Endothelial cell of umbilical vein (primary cell): ENCODE measurements at regions of chr21 and their contacts with region 1.

Region 1: DNA sequence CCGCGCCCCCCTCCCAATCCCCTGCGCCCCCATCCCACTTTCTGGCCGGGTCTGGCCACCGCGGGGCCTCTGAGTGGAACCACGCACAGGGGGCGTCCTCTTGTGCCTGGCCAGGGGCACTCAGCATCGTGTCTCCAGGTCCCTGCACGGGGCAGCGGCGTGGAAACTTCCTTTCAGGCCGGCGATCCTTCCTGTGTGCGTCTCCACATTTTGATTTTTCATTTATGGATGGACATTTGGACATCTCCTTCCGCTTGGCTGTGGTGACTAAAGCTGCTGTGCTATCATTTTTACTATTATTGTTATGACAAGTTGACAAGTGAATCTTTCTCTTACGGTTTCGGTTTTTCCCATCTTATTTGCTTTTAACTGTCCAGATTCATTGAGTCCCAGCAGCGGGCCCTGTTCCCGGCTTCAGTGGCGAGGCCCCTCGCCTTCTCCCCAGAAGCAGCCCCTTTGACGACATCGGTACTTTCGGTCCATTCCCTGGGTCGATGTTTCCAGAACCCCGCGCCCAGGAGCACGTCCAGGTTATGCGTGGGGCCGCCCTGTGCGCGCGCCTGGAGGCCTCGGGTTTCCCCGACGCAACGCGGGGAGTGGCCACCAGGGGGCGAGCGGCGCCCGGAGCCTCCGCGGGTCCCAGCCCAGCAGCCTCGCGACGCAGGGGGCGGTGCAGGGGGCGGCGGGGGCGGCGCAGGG is 12.4 kb upstream of the SLC19A1 start:
- DNase-seq: peak; percentile 75
- H3K4me3 ChIP-seq: peak overlapping the region; percentile 48 to 74 (median 70)
- H3K27ac ChIP-seq: peak overlapping the region; percentile 39
- H3K4me1 ChIP-seq: peaks cover 28% of the 10 kb centered on the region
- H3K27me3 ChIP-seq: peaks cover 0 to 5% of the 10 kb centered on the region in 2 experiments
- CTCF ChIP-seq: peak; percentile 70 to 85
- POLR2A ChIP-seq: peak; percentile 20

Region 2: GRCh38 chr21:45248893-45249381 is 305.7 kb before region 1 on chr21:
- CTCF ChIA-PET with region 1: no interaction called
- POLR2A ChIA-PET with region 1: no interaction called
- dilution Hi-C with region 1: no loop called
- intact Hi-C with region 1: no loop called
- DNase-seq: no peak
- H3K4me3 ChIP-seq: no peak overlapping the region
- H3K27ac ChIP-seq: no peak overlapping the region
- H3K4me1 ChIP-seq: no peaks in the 10 kb centered on the region
- H3K27me3 ChIP-seq: peaks cover 3 to 20% of the 10 kb centered on the region in 2 experiments
- CTCF ChIP-seq: no peak
- POLR2A ChIP-seq: no peak

Region 3: GRCh38 chr21:45568383-45568782 is 13.8 kb after region 1 on chr21:
- CTCF ChIA-PET with region 1: interaction called, 15 read pairs
- POLR2A ChIA-PET with region 1: no interaction called
- dilution Hi-C with region 1: no loop called
- intact Hi-C with region 1: no loop called
- DNase-seq: no peak
- H3K4me3 ChIP-seq: no peak overlapping the region
- H3K27ac ChIP-seq: no peak overlapping the region
- H3K4me1 ChIP-seq: no peaks in the 10 kb centered on the region
- H3K27me3 ChIP-seq: peaks cover 4 to 24% of the 10 kb centered on the region in 2 experiments
- CTCF ChIP-seq: no peak
- POLR2A ChIP-seq: no peak

Region 4: DNA sequence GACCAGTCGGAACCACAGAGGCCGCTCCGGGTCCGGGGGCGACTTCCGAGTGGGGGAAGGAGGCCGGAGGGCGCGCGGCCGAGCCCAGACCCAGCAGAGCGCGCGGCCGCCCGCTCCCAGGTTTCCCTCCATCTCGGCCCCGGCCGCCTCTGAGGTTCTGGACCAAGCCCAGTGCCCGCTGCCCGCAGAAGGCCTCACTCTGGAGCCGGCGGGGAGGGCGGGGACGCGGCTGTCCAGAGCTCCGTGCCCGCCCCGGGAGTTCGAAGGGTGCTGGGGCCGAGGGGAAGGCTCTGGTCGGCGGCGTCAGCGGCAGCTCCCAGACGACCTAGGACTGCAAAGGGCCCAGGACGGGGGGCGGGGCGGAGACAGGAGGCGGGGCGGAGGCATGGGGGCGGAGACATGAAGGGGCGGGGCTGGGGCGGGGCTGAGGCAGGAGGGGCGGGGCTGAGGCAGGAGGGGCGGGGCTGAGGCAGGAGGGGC is 35.7 kb after region 1 on chr21:
- CTCF ChIA-PET with region 1: interaction called, 103 read pairs
- POLR2A ChIA-PET with region 1: no interaction called
- dilution Hi-C with region 1: no loop called
- intact Hi-C with region 1: no loop called
- DNase-seq: peak; percentile 30
- H3K4me3 ChIP-seq: peak overlapping the region; percentile 11 to 39 (median 30)
- H3K27ac ChIP-seq: no peak overlapping the region
- H3K4me1 ChIP-seq: peaks cover 7% of the 10 kb centered on the region
- H3K27me3 ChIP-seq: peaks cover 9 to 10% of the 10 kb centered on the region in 2 experiments
- CTCF ChIP-seq: no peak
- POLR2A ChIP-seq: no peak

Region 5: DNA sequence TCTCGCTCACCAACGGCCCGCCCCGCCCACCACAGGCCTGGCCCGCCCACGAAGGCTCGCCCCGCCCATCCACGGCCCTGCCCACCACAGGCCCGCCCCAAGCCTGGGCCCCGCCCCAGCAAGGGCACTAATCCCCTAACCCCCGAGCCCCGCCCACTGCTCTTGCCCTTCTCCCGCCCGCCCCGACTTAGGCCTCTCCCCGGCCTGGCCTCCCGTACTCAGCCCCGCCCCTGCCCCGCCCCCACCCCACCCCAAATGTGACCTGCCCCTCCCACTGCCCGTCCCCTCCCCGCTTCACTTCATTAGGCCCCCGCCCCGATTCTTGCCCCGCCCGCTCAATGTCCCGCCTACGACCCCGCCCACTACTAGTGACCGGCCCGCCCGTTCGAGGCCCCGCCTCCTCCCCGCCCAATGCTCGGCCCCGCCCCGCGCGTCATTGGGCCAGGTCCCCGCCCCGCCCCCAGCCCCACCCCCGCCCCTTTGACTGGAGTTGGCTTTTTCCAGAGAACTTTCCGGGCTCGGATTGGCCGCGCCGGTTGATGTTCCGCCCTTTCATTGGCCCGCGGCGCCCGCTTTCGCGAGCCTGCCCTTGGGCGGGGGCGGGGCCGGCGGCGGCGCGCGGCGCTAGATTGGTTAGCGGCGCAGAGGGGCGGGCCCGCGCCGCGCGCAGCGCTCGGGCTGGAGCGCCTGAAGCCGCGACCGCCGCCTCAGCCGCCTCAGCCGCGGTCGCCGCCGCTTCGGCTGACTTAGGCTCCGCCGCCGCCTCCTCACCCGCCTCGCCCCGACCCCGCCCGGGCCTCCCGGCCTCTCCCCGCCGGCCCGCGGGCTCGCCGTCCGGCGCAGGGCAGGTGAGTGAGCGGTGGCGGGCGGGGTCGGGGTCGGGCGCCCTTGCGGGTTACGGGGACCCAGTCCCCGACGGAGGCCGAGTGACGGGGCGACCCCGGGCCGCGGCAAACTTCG is 88.7 kb after region 1 on chr21 and contains the start of gene PCBP3:
- CTCF ChIA-PET with region 1: interaction called, 4 read pairs
- POLR2A ChIA-PET with region 1: no interaction called
- dilution Hi-C with region 1: no loop called
- intact Hi-C with region 1: loop called (anchors 2 kb)
- DNase-seq: peak; percentile 86
- H3K4me3 ChIP-seq: peak within 1 kb of the TSS; percentile 16 to 32 (median 22)
- H3K27ac ChIP-seq: no peak within 1 kb of the TSS
- H3K4me1 ChIP-seq: no peaks in the 10 kb centered on the region
- H3K27me3 ChIP-seq: peaks cover 13 to 29% of the 10 kb centered on the region in 2 experiments
- CTCF ChIP-seq: no peak
- POLR2A ChIP-seq: no peak
- total RNA-seq, gene PCBP3: 0.39 and 1.1 TPM in 2 replicates

Region 6: DNA sequence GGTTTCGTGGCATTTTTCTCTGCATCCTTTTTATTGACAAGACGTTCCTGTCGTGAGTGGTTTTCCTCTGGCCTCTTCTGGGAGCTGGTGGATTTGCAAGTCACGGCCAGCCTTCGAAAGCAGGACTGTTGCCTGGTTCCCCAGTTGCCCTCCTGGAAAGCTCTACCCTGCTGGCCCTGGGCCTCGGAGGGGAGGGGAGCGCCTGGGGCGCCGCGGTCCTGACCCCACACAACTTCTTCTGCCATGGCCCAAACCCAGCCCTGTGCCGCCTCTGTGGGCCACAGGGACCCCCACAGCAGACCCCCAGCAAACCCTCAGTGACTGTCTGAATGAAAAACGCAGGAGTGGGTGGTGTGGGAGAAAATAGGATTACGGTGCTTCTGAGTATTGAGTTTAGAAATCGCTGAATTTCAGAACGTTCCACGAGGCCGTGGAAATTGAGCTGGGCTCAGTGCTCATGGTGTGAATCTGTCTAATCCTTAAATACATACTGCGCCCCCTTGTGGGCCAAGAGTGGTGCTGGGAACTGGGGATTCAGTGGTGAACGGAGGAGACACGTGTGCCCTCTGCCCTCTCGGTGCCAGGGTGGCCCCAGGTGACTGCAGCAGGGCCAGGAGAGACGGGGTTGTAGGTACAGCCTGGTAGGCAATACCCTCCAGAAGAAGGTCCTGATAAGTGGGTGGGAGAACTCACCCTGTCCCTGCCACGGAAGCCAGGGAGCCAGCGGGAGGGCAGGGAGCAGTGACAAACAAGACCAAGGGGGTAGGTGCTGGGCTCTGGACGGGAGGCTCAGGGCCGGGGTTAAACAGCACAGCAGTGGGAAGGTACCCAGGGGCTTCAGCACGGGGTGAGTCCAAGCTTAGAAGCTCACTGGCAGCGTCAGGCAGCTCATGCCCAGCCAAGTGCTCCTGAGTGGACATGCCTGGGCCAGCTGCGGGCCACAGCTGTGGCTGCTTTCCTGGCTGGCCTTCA is 325.8 kb after region 1 on chr21:
- CTCF ChIA-PET with region 1: interaction called, 38 read pairs
- POLR2A ChIA-PET with region 1: no interaction called
- dilution Hi-C with region 1: no loop called
- intact Hi-C with region 1: no loop called
- DNase-seq: peak; percentile 44
- H3K4me3 ChIP-seq: no peak overlapping the region
- H3K27ac ChIP-seq: no peak overlapping the region
- H3K4me1 ChIP-seq: no peaks in the 10 kb centered on the region
- H3K27me3 ChIP-seq: no peaks in the 10 kb centered on the region
- CTCF ChIP-seq: peak; percentile 70 to 72
- POLR2A ChIP-seq: no peak